ENCODE measurements at regions of chr17 and their contacts with region 1.

Region 1: DNA sequence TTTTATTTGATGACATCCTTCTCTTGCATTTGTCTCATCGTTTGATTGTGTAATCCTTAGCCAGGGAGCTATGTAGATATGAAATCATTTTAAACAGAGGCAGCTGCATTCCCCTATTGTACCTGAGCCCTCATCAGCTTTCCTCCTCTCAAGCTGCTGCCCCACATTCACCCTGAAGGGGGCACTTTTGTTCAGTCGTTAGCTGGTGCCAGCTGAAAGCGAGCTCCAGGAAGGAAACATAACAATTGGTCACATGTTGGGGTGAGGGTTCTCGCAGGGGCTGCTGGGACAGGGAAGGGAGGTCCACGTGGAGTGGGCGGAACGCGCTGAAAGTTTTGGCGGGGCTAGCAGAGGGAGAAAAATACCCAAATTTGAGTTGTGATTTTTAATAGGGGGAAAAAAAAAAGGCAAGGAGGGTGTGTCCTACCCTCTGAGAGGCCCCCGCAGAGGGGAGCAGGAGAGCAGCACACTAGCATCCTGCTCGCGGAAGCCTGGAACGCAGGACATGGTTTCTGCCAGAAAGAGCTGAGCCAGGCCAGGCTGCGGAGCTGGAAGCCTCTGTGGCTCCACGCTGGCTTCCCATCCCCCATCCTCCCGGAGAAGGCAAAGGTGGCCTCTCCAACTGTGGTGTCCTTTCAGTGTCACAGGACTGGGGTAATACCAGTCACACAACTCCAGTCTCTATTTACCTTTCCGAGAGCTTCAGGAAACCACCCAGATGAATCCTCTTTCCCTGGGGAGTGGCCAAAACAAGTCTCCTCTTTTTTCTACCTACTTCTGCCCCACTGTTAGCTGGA is 8.5 kb upstream of the MSL1 start:
- DNase-seq: peak; percentile 93 to 97 (median 97)
- H3K4me3 ChIP-seq: peak overlapping the region in 6 of 7 experiments; percentile 54 to 82 (median 64)
- H3K27ac ChIP-seq: peak overlapping the region in 1 of 2 experiments; percentile 64
- H3K4me1 ChIP-seq: peaks cover 13 to 63% (median 55%) of the 10 kb centered on the region in 4 experiments
- H3K27me3 ChIP-seq: no peaks in the 10 kb centered on the region

Region 2: GRCh38 chr17:40038882-40039513 is 74.3 kb before region 1 on chr17:
- CTCF ChIA-PET with region 1: interaction called, 15 read pairs
- POLR2A ChIA-PET with region 1: no interaction called
- DNase-seq: peak; percentile 47 to 68 (median 64)
- H3K4me3 ChIP-seq: no peak overlapping the region
- H3K27ac ChIP-seq: no peak overlapping the region
- H3K4me1 ChIP-seq: peaks cover 0 to 5% (median 2%) of the 10 kb centered on the region in 4 experiments
- H3K27me3 ChIP-seq: no peaks in the 10 kb centered on the region

Region 3: GRCh38 chr17:40075201-40075941 is 37.9 kb before region 1 on chr17:
- CTCF ChIA-PET with region 1: interaction called, 20 read pairs
- POLR2A ChIA-PET with region 1: no interaction called
- DNase-seq: peak; percentile 60 to 81 (median 80)
- H3K4me3 ChIP-seq: peak overlapping the region in 2 of 7 experiments; percentile 7 to 32
- H3K27ac ChIP-seq: peak overlapping the region in 1 of 2 experiments; percentile 39
- H3K4me1 ChIP-seq: peaks cover 4 to 51% (median 46%) of the 10 kb centered on the region in 4 experiments
- H3K27me3 ChIP-seq: no peaks in the 10 kb centered on the region

Region 4: GRCh38 chr17:40092581-40092980 is 20.7 kb before region 1 on chr17:
- CTCF ChIA-PET with region 1: interaction called, 48 read pairs
- POLR2A ChIA-PET with region 1: no interaction called
- DNase-seq: no peak
- H3K4me3 ChIP-seq: no peak overlapping the region
- H3K27ac ChIP-seq: no peak overlapping the region
- H3K4me1 ChIP-seq: peaks cover 0 to 21% (median 13%) of the 10 kb centered on the region in 4 experiments
- H3K27me3 ChIP-seq: no peaks in the 10 kb centered on the region

Region 5: DNA sequence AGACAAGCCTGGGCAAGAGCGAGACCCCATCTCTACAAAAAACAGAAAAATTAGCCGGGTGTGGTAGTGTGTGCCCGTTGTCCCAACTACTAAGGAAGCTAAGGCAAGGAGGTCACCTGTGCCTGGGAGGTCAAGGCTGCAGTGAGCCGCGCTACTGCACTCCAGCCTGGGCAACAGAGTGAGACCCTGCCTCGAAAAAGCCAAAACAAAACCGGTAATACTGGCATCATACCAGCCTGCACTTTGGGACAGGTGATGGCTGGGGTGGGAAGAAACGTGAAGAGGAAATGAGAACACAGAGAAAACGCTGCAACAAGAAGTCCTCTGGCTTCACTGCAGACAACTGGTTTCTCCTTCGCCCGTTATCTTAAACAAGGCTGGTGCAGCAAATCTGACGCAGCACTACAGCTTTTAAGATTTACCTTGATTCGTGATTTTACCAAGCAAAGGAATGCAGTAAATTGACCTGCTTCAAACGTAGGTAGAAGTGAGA is 26.3 kb after region 1 on chr17:
- CTCF ChIA-PET with region 1: interaction called, 28 read pairs
- POLR2A ChIA-PET with region 1: interaction called, 5 read pairs
- DNase-seq: no peak
- H3K4me3 ChIP-seq: peak overlapping the region; percentile 13 to 93 (median 88)
- H3K27ac ChIP-seq: peak overlapping the region; percentile 83 to 89
- H3K4me1 ChIP-seq: peaks cover 9 to 23% (median 18%) of the 10 kb centered on the region in 4 experiments
- H3K27me3 ChIP-seq: no peaks in the 10 kb centered on the region

Region 6: GRCh38 chr17:40168262-40168832 is 55.0 kb after region 1 on chr17:
- CTCF ChIA-PET with region 1: interaction called, 91 read pairs
- POLR2A ChIA-PET with region 1: interaction called, 4 read pairs
- DNase-seq: peak; percentile 60 to 78 (median 74)
- H3K4me3 ChIP-seq: no peak overlapping the region
- H3K27ac ChIP-seq: no peak overlapping the region
- H3K4me1 ChIP-seq: no peaks in the 10 kb centered on the region
- H3K27me3 ChIP-seq: no peaks in the 10 kb centered on the region

Region 7: GRCh38 chr17:40242774-40243173 is 129.5 kb after region 1 on chr17:
- CTCF ChIA-PET with region 1: no interaction called
- POLR2A ChIA-PET with region 1: no interaction called
- DNase-seq: no peak
- H3K4me3 ChIP-seq: no peak overlapping the region
- H3K27ac ChIP-seq: no peak overlapping the region
- H3K4me1 ChIP-seq: no peaks in the 10 kb centered on the region
- H3K27me3 ChIP-seq: no peaks in the 10 kb centered on the region

Region 8: GRCh38 chr17:40287494-40288369 is 174.4 kb after region 1 on chr17 and contains the start of gene CDC6:
- CTCF ChIA-PET with region 1: interaction called, 19 read pairs
- POLR2A ChIA-PET with region 1: no interaction called
- DNase-seq: peak; percentile 98 to 100 (median 99)
- H3K4me3 ChIP-seq: peak within 1 kb of the TSS; percentile 80 to 97 (median 88)
- H3K27ac ChIP-seq: peak within 1 kb of the TSS in 1 of 2 experiments; percentile 67
- H3K4me1 ChIP-seq: peaks cover 0 to 16% (median 11%) of the 10 kb centered on the region in 4 experiments
- H3K27me3 ChIP-seq: no peaks in the 10 kb centered on the region